ENCODE measurements at regions of chr6 and their contacts with region 1.

Region 1: GRCh38 chr6:112618849-112619248 is 271.7 kb downstream of the RFPL4B start:
- DNase-seq: no peak
- H3K4me3 ChIP-seq: no peak overlapping the region
- H3K27ac ChIP-seq: no peak overlapping the region
- H3K4me1 ChIP-seq: peaks cover 0 to 2% (median 0%) of the 10 kb centered on the region in 4 experiments; a peak in 1 of 7 replicates
- H3K27me3 ChIP-seq: no peaks in the 10 kb centered on the region
- CTCF ChIP-seq: peak; percentile 20 to 58 (median 44)
- EP300 ChIP-seq: no peak
- POLR2A ChIP-seq: no peak
- RAD21 ChIP-seq: peak; percentile 71 to 77

Region 2: DNA sequence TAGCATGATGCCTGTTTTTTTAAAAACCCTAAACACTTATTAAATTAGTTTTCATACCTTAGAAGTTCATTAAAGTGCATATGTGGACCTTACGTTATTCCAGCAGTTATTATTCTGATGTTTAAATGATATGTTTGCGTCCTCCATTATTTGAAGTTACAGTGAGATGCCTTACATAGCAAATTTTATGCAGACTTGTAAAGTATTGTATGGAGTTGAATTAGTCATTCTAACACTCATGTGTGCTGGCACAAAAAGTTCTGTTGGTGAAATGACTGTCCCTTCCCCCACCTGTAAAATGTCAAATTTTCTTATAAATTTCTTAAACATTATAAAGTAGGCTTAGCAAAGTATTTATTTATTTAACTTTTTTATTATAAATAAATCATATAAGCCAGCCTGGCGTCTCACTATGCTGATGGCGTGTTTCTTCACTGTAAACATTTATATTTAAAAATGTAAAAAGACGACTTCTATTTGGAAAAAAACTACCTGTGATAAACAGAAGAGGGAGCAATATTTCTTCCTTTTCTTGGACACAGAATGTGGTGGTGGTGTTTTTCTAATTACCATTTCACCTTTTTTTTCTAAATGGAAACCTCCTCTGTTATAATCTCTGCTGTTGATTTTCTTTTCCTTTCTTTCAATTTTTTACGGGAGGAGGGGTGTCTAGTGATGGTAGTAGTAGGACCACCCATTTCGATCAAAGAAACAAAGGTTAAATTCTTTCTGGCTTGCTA is 116.3 kb before region 1 on chr6:
- CTCF ChIA-PET with region 1: interaction called, 12 read pairs
- POLR2A ChIA-PET with region 1: no interaction called
- DNase-seq: no peak
- H3K4me3 ChIP-seq: peak overlapping the region in 1 of 4 experiments; percentile 8; a peak in 1 of 8 replicates
- H3K27ac ChIP-seq: no peak overlapping the region
- H3K4me1 ChIP-seq: peaks cover 3 to 8% (median 4%) of the 10 kb centered on the region in 4 experiments; a peak in 5 of 7 replicates
- H3K27me3 ChIP-seq: no peaks in the 10 kb centered on the region
- CTCF ChIP-seq: peak in 1 of 3 experiments; percentile 29; a peak in 2 of 4 replicates
- EP300 ChIP-seq: no peak
- POLR2A ChIP-seq: no peak
- RAD21 ChIP-seq: peak in 1 of 2 experiments; percentile 32; a peak in 3 of 4 replicates

Measured in H1 (cell line).